ENCODE measurements at regions of chr14 and their contacts with region 1.

Region 1: DNA sequence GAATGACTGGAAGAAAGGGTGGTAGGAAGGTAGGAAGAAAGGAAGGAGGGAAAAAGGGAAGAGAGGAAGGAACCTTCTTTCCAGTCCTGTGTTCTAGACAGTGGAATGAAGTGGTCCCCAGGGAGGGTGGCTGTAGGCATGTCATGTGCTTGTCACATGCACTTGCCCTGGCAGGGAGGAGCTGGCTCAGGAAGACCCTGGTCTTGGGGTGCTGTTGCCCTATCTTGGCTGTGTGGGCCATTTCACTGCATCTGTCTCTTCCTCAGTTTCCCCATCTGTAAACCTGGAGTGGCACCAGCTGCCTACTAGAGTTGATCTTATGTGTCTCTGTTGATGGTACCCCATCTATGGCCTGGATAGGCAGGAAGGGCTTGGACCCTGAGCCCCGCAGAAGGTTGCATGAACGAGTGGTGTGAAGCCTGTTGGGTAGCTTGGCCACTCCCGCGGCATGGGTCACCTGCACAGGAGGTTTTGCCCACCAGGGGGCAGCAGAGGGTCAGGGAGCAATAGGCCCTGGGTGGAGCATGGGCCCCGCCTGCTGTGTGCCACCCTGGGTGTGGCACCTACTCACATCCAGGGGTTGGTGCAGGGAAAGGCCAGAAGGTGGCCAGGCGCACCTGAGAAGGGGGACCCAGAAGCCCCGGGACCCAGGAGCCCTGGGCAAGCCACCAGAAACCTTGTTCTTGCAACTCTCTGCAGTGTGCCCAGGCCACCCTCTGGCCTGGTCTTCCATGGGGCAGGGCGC is 25.1 kb downstream of the MEG3 start:
- DNase-seq: peak; percentile 95
- H3K4me3 Mint-ChIP-seq: no peak overlapping the region
- H3K27ac Mint-ChIP-seq: no peak overlapping the region
- H3K4me1 Mint-ChIP-seq: peaks cover 7% of the 10 kb centered on the region
- H3K27me3 Mint-ChIP-seq: no peaks in the 10 kb centered on the region
- CTCF ChIP-seq: peak; percentile 92

Region 2: DNA sequence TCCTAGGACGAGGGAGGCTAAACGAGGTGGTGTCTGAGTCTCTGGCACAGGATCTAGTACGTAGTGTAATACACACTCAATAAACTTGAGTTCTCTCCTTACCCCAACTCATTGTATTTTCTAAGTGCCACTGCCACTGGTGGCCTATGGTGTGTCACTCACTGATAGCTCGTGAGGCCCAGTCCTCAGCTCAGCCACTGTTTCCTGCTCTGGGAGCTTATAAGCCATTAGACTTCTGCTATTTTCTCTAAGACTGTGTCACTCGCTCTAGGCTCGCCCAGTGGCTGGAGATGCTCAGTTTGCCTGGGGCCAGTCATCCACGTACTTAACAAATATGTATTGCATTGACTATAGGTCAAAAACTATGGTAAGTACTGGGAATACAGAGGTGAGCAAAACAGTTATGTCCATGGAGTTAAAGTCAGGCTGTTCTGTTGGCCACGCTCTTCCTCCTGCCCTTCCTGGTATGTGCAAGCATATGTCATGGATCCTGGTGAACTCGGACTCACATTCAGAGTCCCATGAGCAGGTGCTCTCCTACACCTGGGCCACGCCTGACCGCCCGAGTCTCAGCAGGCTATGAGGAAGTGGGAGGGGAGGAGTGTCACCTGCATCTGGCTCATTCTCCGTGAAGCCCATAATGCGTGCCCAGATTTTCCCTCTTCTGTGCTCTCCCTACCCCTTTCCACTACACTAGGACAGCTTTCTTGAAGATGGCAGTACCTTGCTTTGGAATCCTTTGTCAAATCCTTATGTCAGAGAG is 733.2 kb before region 1 on chr14:
- CTCF ChIA-PET with region 1: no interaction called
- intact Hi-C with region 1: no loop called
- DNase-seq: no peak
- H3K4me3 Mint-ChIP-seq: no peak overlapping the region
- H3K27ac Mint-ChIP-seq: no peak overlapping the region
- H3K4me1 Mint-ChIP-seq: no peaks in the 10 kb centered on the region
- H3K27me3 Mint-ChIP-seq: no peaks in the 10 kb centered on the region
- CTCF ChIP-seq: no peak

Region 3: DNA sequence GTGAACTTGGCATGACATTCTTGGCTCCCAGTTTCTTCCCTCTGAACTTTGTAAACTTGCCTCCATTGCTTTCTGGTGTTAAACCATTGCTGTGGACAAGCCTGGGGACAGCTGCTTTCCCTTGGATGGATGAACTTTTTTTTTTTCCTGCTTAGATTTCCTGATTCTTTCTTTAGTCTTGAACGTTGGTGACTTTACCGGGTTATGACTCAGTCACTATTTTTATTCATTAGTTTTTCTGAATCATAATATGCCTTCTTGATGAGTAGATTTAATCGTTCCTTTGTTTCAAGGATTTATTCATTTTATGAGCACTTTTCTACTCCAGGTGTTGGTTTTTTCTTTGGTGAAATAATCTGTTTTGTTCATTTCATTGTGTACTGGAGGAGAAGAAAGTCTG is 207.6 kb after region 1 on chr14:
- CTCF ChIA-PET with region 1: no interaction called
- intact Hi-C with region 1: loop called (anchors 10 kb)
- DNase-seq: no peak
- H3K4me3 Mint-ChIP-seq: no peak overlapping the region
- H3K27ac Mint-ChIP-seq: peak overlapping the region; percentile 66
- H3K4me1 Mint-ChIP-seq: peaks cover 12% of the 10 kb centered on the region
- H3K27me3 Mint-ChIP-seq: no peaks in the 10 kb centered on the region
- CTCF ChIP-seq: no peak

Region 4: GRCh38 chr14:101628471-101628966 is 777.5 kb after region 1 on chr14:
- CTCF ChIA-PET with region 1: no interaction called
- intact Hi-C with region 1: loop called (anchors 2 kb)
- DNase-seq: peak; percentile 83
- H3K4me3 Mint-ChIP-seq: no peak overlapping the region
- H3K27ac Mint-ChIP-seq: no peak overlapping the region
- H3K4me1 Mint-ChIP-seq: no peaks in the 10 kb centered on the region
- H3K27me3 Mint-ChIP-seq: peaks cover 4% of the 10 kb centered on the region
- CTCF ChIP-seq: peak; percentile 93

Measured in Calu3 (cell line).